Posterior cingulate gyrus (tissue), 11 donors: ENCODE measurements at regions of chr2 and their contacts with region 1.

Region 1: GRCh38 chr2:64661741-64662169 is 8.0 kb upstream of the SERTAD2 start:
- DNase-seq: no peak

Region 2: GRCh38 chr2:64711252-64711800 is 49.6 kb after region 1 on chr2:
- intact Hi-C with region 1: loop called (anchors 5 kb)
- DNase-seq: no peak

Region 3: DNA sequence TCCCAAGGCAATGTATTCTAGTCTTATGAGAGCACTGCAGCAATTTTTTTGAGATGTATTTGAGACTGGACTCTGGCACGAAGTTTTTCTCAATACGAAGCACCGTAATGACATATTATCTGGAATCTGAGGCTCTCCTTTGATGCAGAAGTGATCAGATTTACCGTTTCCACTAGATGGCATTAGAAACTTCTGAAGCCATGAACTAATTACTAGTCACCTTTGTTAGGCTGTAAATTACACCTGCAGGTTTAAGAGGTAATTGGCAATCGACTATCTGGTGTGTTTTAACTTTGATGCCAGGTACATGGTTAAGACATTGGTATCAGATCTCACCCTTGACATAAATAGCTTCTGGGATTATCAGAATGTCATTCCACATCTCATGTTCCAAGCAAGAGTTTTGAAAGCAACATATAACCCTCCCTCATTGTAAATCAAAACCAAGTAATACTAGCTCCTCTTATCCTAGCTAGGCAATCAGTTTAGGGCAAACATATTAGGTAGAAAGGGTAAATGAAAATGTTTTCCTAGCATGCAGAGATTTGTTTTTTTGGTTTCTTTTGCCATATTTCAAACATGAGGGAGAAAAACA is 1025.3 kb after region 1 on chr2:
- intact Hi-C with region 1: no loop called
- DNase-seq: no peak